A549 (cell line): ENCODE measurements at regions of chr4 and their contacts with region 1.

Region 1: GRCh38 chr4:185039508-185040273 is 21.4 kb downstream of the HELT start:
- DNase-seq: peak; percentile 53 to 66
- ATAC-seq: peak; percentile 86 to 93
- H3K4me3 ChIP-seq: peak overlapping the region; percentile 33
- H3K27ac ChIP-seq: peak overlapping the region; percentile 52 to 82; a peak in 5 of 6 replicates
- H3K4me1 ChIP-seq: no peaks in the 10 kb centered on the region; the same call in 2 of the 3 replicates
- CTCF ChIP-seq: peak; percentile 73
- EP300 ChIP-seq: no peak
- POLR2A ChIP-seq: no peak
- RAD21 ChIP-seq: peak; percentile 66 to 67

Region 2: GRCh38 chr4:185134307-185134869 is 94.7 kb after region 1 on chr4:
- CTCF ChIA-PET with region 1: interaction called, 12 read pairs
- POLR2A ChIA-PET with region 1: no interaction called
- DNase-seq: peak; percentile 47 to 50
- ATAC-seq: peak; percentile 83 to 85; a peak in 5 of 6 replicates
- H3K4me3 ChIP-seq: no peak overlapping the region
- H3K27ac ChIP-seq: no peak overlapping the region
- H3K4me1 ChIP-seq: no peaks in the 10 kb centered on the region
- CTCF ChIP-seq: peak; percentile 74
- EP300 ChIP-seq: no peak
- POLR2A ChIP-seq: no peak
- RAD21 ChIP-seq: peak; percentile 75 to 76